ENCODE measurements at regions of chr5 and their contacts with region 1.

Region 1: DNA sequence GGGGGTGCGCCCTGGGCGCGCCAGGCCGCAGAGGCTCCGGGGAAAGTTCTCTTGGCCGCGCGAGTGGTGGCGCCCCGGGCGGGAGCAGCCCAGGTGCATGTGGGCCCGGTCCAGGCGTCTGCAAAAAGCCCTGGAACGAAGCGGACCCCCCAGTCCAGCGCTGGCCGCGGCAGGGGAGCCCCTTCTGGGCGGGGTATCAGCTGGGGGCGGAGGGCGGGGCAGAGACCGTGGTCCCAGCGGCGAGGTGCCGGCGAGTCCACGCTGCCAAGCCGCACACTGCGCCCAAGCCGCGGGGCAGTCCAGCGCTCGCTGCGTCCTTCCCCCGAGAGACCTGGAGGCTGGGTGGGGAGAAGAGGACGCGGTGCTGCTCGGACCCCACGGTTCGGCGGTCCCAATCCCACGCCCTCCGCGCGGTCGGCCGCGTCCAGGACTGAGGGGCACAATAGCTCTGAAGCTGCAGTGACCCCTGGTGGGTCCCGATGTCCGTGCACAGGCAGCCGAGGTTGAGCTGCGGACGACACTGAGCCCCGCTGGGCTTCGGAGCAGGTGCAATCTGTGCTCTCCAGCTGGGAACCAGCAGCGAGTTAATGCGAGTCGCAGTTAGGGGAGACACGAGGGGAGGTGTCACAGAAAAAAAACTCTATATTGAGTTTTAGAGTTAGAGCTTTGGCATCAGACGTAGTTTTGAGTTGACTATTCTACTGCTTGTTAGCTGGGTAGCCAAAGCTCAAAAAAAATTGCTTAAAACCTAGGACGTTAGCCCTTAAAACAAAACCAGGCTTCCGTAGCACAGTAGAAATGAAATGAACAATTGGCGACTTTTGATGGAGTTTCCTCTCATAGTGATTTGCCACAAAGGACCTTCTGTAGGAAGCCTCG is 1.1 kb upstream of the EPB41L4A start:
- DNase-seq: peak; percentile 82 to 90
- ATAC-seq: peak; percentile 96 to 97 (median 97)
- H3K4me3 ChIP-seq: peak overlapping the region; percentile 85
- H3K27ac ChIP-seq: peak overlapping the region; percentile 56
- H3K4me1 ChIP-seq: no peaks in the 10 kb centered on the region
- H3K27me3 ChIP-seq: peaks cover 0 to 35% (median 4%) of the 10 kb centered on the region in 3 donors
- CTCF ChIP-seq: peak; percentile 85

Region 2: GRCh38 chr5:112174959-112175594 is 245.1 kb before region 1 on chr5:
- intact Hi-C with region 1: loop called in 1 of 2 experiments (anchors 5 kb)
- DNase-seq: peak in 1 of 2 donors; percentile 13
- ATAC-seq: peak in 3 of 4 donors; percentile 28 to 73 (median 45)
- H3K4me3 ChIP-seq: no peak overlapping the region
- H3K27ac ChIP-seq: no peak overlapping the region
- H3K4me1 ChIP-seq: no peaks in the 10 kb centered on the region
- H3K27me3 ChIP-seq: no peaks in the 10 kb centered on the region
- CTCF ChIP-seq: peak; percentile 59

Region 3: DNA sequence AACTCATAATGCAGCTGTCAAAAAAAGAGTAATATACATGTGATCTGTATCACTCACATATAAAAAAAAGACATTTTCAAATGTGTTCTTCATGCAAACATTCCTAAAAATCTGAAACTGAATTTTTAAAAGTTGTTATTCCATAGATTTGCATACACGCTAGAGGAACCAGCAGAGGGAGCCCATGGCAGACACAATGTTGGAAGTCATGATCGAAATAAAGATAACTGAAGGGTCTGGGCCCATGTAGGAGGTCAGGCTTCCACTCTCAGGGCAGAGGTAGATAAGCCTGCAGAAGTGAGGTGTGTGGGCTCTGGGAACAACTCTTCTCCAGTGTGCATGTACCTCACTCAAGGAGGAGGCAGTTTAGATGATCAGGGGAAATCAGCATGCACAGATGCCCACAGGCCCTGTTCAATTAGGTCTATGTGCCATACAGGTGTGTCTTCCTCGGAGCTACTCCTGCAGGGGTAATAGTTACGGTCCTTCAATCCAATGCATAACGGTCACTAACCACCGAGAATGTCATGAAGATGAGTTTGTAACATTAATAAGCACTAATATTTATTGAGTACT is 209.7 kb before region 1 on chr5:
- intact Hi-C with region 1: loop called (anchors 1 to 2 kb)
- DNase-seq: peak in 1 of 2 donors; percentile 50
- ATAC-seq: peak; percentile 51 to 84 (median 63)
- H3K4me3 ChIP-seq: no peak overlapping the region
- H3K27ac ChIP-seq: no peak overlapping the region
- H3K4me1 ChIP-seq: no peaks in the 10 kb centered on the region
- H3K27me3 ChIP-seq: no peaks in the 10 kb centered on the region
- CTCF ChIP-seq: peak; percentile 67

Region 4: GRCh38 chr5:112388739-112389138 is 31.5 kb before region 1 on chr5:
- intact Hi-C with region 1: no loop called
- DNase-seq: no peak
- ATAC-seq: no peak
- H3K4me3 ChIP-seq: no peak overlapping the region
- H3K27ac ChIP-seq: no peak overlapping the region
- H3K4me1 ChIP-seq: no peaks in the 10 kb centered on the region
- H3K27me3 ChIP-seq: no peaks in the 10 kb centered on the region
- CTCF ChIP-seq: no peak

Region 5: GRCh38 chr5:112551419-112552032 is 131.3 kb after region 1 on chr5:
- intact Hi-C with region 1: no loop called
- DNase-seq: no peak
- ATAC-seq: peak in 3 of 4 donors; percentile 64 to 91 (median 69)
- H3K4me3 ChIP-seq: no peak overlapping the region
- H3K27ac ChIP-seq: no peak overlapping the region
- H3K4me1 ChIP-seq: no peaks in the 10 kb centered on the region
- H3K27me3 ChIP-seq: no peaks in the 10 kb centered on the region
- CTCF ChIP-seq: peak; percentile 78